HCT116 (cell line): ENCODE measurements at regions of chr11 and their contacts with region 1.

Region 1: GRCh38 chr11:61679893-61680621 is at the start of gene DAGLA:
- DNase-seq: no peak
- ATAC-seq: peak; percentile 93
- H3K4me3 ChIP-seq: peak within 1 kb of the TSS; percentile 50 to 65
- H3K27ac ChIP-seq: peak within 1 kb of the TSS; percentile 47; the same call in 1 of the 2 replicates
- H3K4me1 ChIP-seq: peaks cover 3 to 11% of the 10 kb centered on the region in 2 experiments; a peak in 2 of 4 replicates
- H3K27me3 ChIP-seq: peaks cover 20% of the 10 kb centered on the region
- CTCF ChIP-seq: peak; percentile 65 to 94 (median 76)
- POLR2A ChIP-seq: no peak
- RAD21 ChIP-seq: peak; percentile 72
- total RNA-seq, gene DAGLA: 2.7 TPM

Region 2: DNA sequence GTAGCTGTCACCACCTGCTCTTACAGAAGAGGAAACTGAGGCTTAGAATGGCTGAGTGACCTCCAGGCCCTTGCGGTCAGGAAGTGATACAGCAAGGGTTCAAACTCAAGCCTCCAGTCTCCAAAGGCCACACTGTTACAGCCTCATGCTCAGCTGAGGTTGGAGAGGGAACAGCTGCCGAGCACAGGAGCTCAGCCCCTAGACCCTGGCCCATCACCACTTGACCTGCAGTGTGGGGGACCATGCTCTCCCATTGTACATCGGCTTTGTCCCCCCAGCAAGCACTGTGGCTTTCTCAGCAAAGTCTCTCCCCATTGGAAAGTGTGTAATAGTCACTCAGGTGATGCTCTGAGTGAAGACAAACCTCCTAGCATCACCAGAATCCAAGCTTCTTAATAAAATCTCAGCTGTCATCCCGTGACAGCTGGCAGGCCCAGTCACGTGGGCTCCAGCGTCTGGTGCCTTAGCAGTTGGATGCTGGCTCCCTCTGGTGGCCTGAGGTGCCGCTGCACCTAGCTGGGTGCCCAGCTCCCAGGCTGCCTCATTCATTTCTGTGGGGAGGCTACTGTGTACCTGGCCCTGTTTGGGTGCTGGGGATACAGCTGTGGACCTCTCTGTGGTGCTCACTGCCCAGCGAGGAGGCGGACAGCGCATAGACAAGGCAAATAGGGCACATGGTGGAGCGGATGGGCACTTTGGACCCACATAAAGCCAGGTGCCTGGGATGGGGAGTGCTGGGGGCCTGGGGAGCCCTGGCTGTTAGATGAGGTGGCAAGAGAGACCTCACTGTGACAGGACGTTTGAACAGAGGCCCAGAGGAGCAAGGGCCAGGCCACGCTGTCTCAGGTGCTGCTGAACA is 53.3 kb after region 1 on chr11:
- CTCF ChIA-PET with region 1: interaction called, 6 read pairs
- POLR2A ChIA-PET with region 1: no interaction called
- RAD21 ChIA-PET with region 1: no interaction called
- intact Hi-C with region 1: loop called (anchors 1 kb)
- DNase-seq: peak; percentile 63
- ATAC-seq: peak; percentile 69
- H3K4me3 ChIP-seq: no peak overlapping the region
- H3K27ac ChIP-seq: no peak overlapping the region
- H3K4me1 ChIP-seq: peaks cover 29 to 43% of the 10 kb centered on the region in 2 experiments
- H3K27me3 ChIP-seq: no peaks in the 10 kb centered on the region
- CTCF ChIP-seq: peak; percentile 95 to 99 (median 99)
- POLR2A ChIP-seq: no peak
- RAD21 ChIP-seq: peak; percentile 98